ENCODE measurements at regions of chr11 and their contacts with region 1.

Region 1: DNA sequence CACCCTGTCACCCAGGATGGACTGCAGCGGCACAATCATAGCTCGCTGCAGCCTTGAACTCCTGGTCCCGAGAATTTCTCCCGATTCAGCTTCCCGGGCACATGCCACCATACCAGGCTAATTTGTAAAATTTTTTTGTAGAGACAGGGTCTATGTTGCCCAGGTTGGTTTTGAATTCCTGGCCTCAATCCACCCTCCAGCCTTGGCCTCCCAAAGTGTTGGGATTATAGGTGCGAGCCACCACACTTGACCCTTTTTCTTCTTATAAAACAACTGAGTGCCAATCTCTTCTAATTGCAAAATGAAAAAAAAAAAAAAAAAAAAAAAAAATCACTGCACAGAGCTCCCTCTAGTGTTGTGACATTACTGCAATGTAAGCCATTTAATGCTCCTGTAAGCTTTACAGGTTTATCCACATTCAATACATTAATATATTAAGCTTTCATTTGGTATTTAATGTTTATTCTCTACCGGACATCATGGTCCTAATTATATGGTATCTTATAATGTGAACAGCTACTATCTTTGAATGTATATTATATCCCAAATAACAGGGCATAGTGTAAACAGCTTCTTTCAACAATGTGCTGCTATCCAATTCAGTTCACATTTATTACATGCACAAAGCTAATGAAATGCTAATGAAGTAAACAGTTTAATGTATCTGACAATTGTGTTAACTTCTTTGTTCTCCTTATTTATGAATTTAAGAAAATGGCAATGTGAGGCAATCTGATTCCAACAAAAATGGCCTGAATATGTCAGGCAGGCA is 44.6 kb downstream of the COPB1 start:
- DNase-seq: peak in 2 of 35 experiments; percentile 8 to 58
- ATAC-seq: peak in 2 of 4 experiments; percentile 16 to 52
- H3K4me3 ChIP-seq: no peak overlapping the region
- H3K4me3 Mint-ChIP-seq: no peak overlapping the region
- H3K27ac ChIP-seq: no peak overlapping the region
- H3K27ac Mint-ChIP-seq: no peak overlapping the region
- H3K4me1 ChIP-seq: peaks cover 0 to 4% of the 10 kb centered on the region in 2 experiments
- H3K4me1 Mint-ChIP-seq: peaks cover 0 to 5% (median 0%) of the 10 kb centered on the region in 3 donors
- H3K27me3 ChIP-seq: no peaks in the 10 kb centered on the region
- H3K27me3 Mint-ChIP-seq: no peaks in the 10 kb centered on the region

Region 2: GRCh38 chr11:14218728-14219127 is 236.3 kb before region 1 on chr11:
- CTCF ChIA-PET with region 1: no interaction called
- POLR2A ChIA-PET with region 1: no interaction called
- DNase-seq: no peak
- ATAC-seq: no peak
- H3K4me3 ChIP-seq: no peak overlapping the region
- H3K4me3 Mint-ChIP-seq: no peak overlapping the region
- H3K27ac ChIP-seq: no peak overlapping the region
- H3K27ac Mint-ChIP-seq: no peak overlapping the region
- H3K4me1 ChIP-seq: no peaks in the 10 kb centered on the region
- H3K4me1 Mint-ChIP-seq: no peaks in the 10 kb centered on the region
- H3K27me3 ChIP-seq: no peaks in the 10 kb centered on the region
- H3K27me3 Mint-ChIP-seq: peaks cover 2 to 8% of the 10 kb centered on the region in 2 donors

Region 3: GRCh38 chr11:14249121-14249963 is 205.7 kb before region 1 on chr11:
- CTCF ChIA-PET with region 1: interaction called, 10 read pairs
- POLR2A ChIA-PET with region 1: no interaction called
- DNase-seq: peak; percentile 27 to 83 (median 62)
- ATAC-seq: peak; percentile 57 to 68 (median 65)
- H3K4me3 ChIP-seq: peak overlapping the region in 1 of 2 donors; percentile 42
- H3K4me3 Mint-ChIP-seq: peak overlapping the region; percentile 22 to 79 (median 46)
- H3K27ac ChIP-seq: no peak overlapping the region
- H3K27ac Mint-ChIP-seq: peak overlapping the region in 1 of 2 donors; percentile 58
- H3K4me1 ChIP-seq: peaks cover 12 to 17% of the 10 kb centered on the region in 2 experiments
- H3K4me1 Mint-ChIP-seq: peaks cover 21 to 26% (median 24%) of the 10 kb centered on the region in 3 donors
- H3K27me3 ChIP-seq: no peaks in the 10 kb centered on the region
- H3K27me3 Mint-ChIP-seq: no peaks in the 10 kb centered on the region

Region 4: DNA sequence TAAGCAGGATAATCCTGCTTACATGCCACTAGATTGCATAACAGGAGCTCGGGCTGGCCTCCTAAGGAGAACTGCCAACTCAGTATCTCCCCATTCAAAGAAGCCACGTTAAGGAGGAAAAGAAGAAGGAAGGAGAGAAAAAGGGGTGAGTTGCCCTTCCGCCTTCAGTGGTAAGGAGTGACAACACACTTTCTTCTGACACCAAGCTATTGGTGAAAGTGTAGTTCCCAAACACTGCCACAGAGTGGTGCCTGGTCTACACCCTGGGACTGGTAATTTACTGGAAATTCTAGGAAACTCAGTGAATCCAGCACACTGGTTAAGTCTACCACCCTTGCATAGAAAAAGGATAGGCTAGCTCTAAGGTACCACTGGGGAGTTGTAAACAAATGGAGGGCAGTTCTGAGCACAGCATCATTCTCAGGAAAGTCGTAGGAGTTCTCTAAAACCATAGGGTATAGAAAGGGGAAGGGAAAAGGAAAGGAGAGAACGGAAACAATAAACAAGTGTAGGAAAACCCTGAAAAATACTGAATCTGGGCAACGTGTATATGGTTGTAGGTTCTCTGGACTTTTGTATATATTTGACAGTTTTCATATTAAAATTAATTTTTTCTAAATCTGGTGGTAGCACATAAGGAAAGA is 154.3 kb before region 1 on chr11:
- CTCF ChIA-PET with region 1: interaction called, 36 to 140 read pairs
- POLR2A ChIA-PET with region 1: interaction called, 4 to 5 read pairs
- DNase-seq: peak in 33 of 35 experiments; percentile 3 to 70 (median 29)
- ATAC-seq: peak; percentile 68 to 87 (median 80)
- H3K4me3 ChIP-seq: no peak overlapping the region
- H3K4me3 Mint-ChIP-seq: no peak overlapping the region
- H3K27ac ChIP-seq: no peak overlapping the region
- H3K27ac Mint-ChIP-seq: no peak overlapping the region
- H3K4me1 ChIP-seq: peaks cover 0 to 7% of the 10 kb centered on the region in 2 experiments
- H3K4me1 Mint-ChIP-seq: peaks cover 9 to 25% (median 18%) of the 10 kb centered on the region in 3 donors
- H3K27me3 ChIP-seq: no peaks in the 10 kb centered on the region
- H3K27me3 Mint-ChIP-seq: no peaks in the 10 kb centered on the region

Region 5: DNA sequence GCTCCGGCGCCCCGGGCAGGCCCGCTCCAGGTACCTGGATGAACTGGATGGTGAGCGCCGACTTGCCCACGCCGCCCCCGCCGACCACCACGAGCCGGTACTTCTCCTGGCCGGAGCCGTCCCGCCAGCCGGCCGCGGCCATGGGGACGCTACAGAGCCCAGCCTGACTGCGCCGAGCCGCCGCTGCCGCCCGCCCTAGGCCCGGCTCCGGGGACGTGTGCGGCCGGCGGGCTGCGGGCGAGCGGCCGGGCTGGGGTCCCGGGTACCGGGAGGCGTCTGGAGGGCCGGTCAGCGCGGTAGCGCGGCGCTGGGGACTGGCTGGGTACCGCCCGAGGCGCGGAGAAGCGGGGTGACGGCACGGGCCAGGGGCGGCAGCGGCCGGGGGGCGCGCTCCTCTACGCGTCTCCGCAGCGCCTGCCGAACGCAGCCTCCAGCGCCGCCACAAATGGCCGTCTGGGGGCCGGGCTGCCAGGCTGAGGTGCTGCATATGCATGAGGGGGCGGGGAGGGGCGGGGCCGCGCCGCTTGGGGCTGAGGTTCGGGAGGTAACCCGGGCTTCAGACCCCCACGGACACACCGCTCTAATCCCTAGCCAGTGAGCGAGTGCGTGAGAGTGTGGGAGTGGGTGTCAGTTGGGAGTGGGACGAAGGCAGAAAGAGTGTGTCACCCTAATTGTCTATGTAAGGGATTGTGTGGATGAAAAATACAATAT is 96.2 kb before region 1 on chr11 and contains the start of gene RRAS2:
- CTCF ChIA-PET with region 1: interaction called, 3 to 13 read pairs
- POLR2A ChIA-PET with region 1: no interaction called
- DNase-seq: peak; percentile 46 to 88 (median 75)
- ATAC-seq: peak; percentile 93 to 97 (median 94)
- H3K4me3 ChIP-seq: peak within 1 kb of the TSS; percentile 72 to 95
- H3K4me3 Mint-ChIP-seq: peak within 1 kb of the TSS; percentile 87 to 96 (median 88)
- H3K27ac ChIP-seq: peak within 1 kb of the TSS; percentile 23
- H3K27ac Mint-ChIP-seq: peak within 1 kb of the TSS; percentile 70 to 74
- H3K4me1 ChIP-seq: peaks cover 7 to 18% of the 10 kb centered on the region in 2 experiments
- H3K4me1 Mint-ChIP-seq: peaks cover 31 to 44% (median 37%) of the 10 kb centered on the region in 3 donors
- H3K27me3 ChIP-seq: peaks cover 0 to 2% of the 10 kb centered on the region in 2 experiments
- H3K27me3 Mint-ChIP-seq: no peaks in the 10 kb centered on the region
- total RNA-seq, gene RRAS2: 17.9 to 30.2 (median 18.5) TPM

Region 6: DNA sequence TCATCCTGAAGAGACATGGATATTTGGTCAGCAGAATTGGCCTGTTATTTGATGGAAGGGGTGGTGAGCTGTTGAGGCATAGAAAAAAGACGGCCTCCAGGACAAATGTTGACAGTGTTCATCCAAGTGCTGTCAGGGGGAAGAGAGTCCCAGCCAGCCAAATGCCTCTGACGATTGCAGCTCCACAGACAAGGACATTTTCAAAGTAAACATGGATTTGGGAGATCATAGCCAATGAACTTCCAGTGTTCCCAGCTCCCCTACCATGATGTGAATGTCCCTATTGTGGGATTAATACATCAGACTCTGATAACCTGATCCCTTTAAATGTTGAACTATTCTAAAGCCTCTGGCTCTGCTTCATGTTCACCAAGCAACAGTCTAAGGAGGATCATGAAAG is 96.3 kb after region 1 on chr11:
- CTCF ChIA-PET with region 1: no interaction called
- POLR2A ChIA-PET with region 1: no interaction called
- DNase-seq: no peak
- ATAC-seq: no peak
- H3K4me3 ChIP-seq: no peak overlapping the region
- H3K4me3 Mint-ChIP-seq: no peak overlapping the region
- H3K27ac ChIP-seq: no peak overlapping the region
- H3K27ac Mint-ChIP-seq: no peak overlapping the region
- H3K4me1 ChIP-seq: peaks cover 4 to 25% of the 10 kb centered on the region in 2 experiments
- H3K4me1 Mint-ChIP-seq: peaks cover 34 to 37% (median 34%) of the 10 kb centered on the region in 3 donors
- H3K27me3 ChIP-seq: no peaks in the 10 kb centered on the region
- H3K27me3 Mint-ChIP-seq: no peaks in the 10 kb centered on the region

Region 7: GRCh38 chr11:14643697-14644225 is 188.7 kb after region 1 on chr11 and contains the start of gene PDE3B:
- CTCF ChIA-PET with region 1: no interaction called
- POLR2A ChIA-PET with region 1: no interaction called
- DNase-seq: peak; percentile 42 to 79 (median 66)
- ATAC-seq: peak; percentile 65 to 74 (median 72)
- H3K4me3 ChIP-seq: peak within 1 kb of the TSS; percentile 97 to 100
- H3K4me3 Mint-ChIP-seq: peak within 1 kb of the TSS; percentile 85 to 87 (median 86)
- H3K27ac ChIP-seq: peak within 1 kb of the TSS; percentile 80
- H3K27ac Mint-ChIP-seq: peak within 1 kb of the TSS; percentile 86 to 87
- H3K4me1 ChIP-seq: peaks cover 11 to 44% of the 10 kb centered on the region in 2 experiments
- H3K4me1 Mint-ChIP-seq: peaks cover 49 to 58% (median 54%) of the 10 kb centered on the region in 3 donors
- H3K27me3 ChIP-seq: no peaks in the 10 kb centered on the region
- H3K27me3 Mint-ChIP-seq: no peaks in the 10 kb centered on the region
- total RNA-seq, gene PDE3B: 130 to 162 (median 143) TPM

Measured in T-cell (primary cell).